CD4-positive, alpha-beta memory T cell (primary cell): ENCODE measurements at regions of chr12 and their contacts with region 1.

Region 1: DNA sequence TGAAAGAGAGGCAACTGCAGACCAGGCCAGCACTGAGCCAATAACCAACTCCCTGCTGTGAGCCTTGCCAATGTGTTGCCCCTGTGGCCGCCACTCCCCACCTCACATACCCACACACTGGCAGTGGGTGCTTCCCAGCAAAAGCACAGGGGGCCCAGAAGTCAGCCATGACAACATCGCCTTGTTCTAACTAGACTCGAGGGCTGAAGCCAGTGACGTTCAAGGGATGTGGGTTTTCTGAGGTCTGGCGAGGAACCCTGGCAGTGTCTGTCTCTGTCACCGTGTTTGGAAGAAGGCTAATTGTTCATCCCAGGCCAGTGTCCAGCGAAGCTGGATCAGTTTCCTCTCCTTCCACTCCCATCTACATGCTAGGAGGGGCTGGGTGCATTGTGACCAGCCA is 311.8 kb upstream of the AMIGO2 start:
- DNase-seq: peak; percentile 66 to 86 (median 72)
- H3K4me3 ChIP-seq: no peak overlapping the region
- H3K4me3 Mint-ChIP-seq: peak overlapping the region; percentile 29 to 83 (median 63)
- H3K27ac ChIP-seq: peak overlapping the region; percentile 54
- H3K27ac Mint-ChIP-seq: peak overlapping the region; percentile 95 to 99 (median 98)
- H3K4me1 ChIP-seq: peaks cover 60% of the 10 kb centered on the region
- H3K4me1 Mint-ChIP-seq: peaks cover 45 to 74% (median 60%) of the 10 kb centered on the region in 4 donors
- H3K27me3 ChIP-seq: no peaks in the 10 kb centered on the region
- H3K27me3 Mint-ChIP-seq: no peaks in the 10 kb centered on the region

Region 2: DNA sequence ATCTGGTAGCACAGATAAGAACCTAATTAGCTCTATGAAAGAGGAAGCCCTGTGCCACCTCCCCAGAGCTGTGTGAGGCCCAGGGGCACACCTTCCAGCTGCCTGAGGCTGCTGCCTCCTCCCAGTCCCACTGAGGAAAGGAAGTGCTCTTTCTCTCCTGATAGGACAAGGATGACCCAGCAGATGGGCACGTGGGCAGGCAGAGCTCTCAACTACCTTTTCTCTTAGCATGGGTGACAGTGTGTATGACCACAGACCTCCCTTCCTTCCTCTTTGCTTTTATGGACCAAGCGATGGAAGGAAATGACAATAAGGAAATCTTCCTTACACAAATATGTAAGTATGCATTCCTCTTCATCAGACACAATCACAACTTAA is 184.2 kb before region 1 on chr12:
- CTCF ChIA-PET with region 1: interaction called, 48 read pairs
- POLR2A ChIA-PET with region 1: interaction called, 75 read pairs
- intact Hi-C with region 1: no loop called
- DNase-seq: peak; percentile 38 to 76 (median 44)
- H3K4me3 ChIP-seq: peak overlapping the region; percentile 24 to 64
- H3K4me3 Mint-ChIP-seq: peak overlapping the region; percentile 68 to 97 (median 82)
- H3K27ac ChIP-seq: peak overlapping the region; percentile 60
- H3K27ac Mint-ChIP-seq: peak overlapping the region; percentile 87 to 96 (median 94)
- H3K4me1 ChIP-seq: peaks cover 77% of the 10 kb centered on the region
- H3K4me1 Mint-ChIP-seq: peaks cover 64 to 88% (median 76%) of the 10 kb centered on the region in 4 donors
- H3K27me3 ChIP-seq: no peaks in the 10 kb centered on the region
- H3K27me3 Mint-ChIP-seq: no peaks in the 10 kb centered on the region

Region 3: GRCh38 chr12:47449797-47450196 is 58.2 kb after region 1 on chr12:
- CTCF ChIA-PET with region 1: no interaction called
- POLR2A ChIA-PET with region 1: no interaction called
- intact Hi-C with region 1: no loop called
- DNase-seq: no peak
- H3K4me3 ChIP-seq: no peak overlapping the region
- H3K4me3 Mint-ChIP-seq: no peak overlapping the region
- H3K27ac ChIP-seq: no peak overlapping the region
- H3K27ac Mint-ChIP-seq: no peak overlapping the region
- H3K4me1 ChIP-seq: no peaks in the 10 kb centered on the region
- H3K4me1 Mint-ChIP-seq: no peaks in the 10 kb centered on the region
- H3K27me3 ChIP-seq: no peaks in the 10 kb centered on the region
- H3K27me3 Mint-ChIP-seq: peaks cover 1 to 9% of the 10 kb centered on the region in 2 donors